Psoas muscle (tissue), 8 donors: ENCODE measurements at regions of chr10 and their contacts with region 1.

Region 1: GRCh38 chr10:45249978-45250693 is 65.3 kb downstream of the OR13A1 start:
- DNase-seq: no peak
- ATAC-seq: peak in 1 of 4 donors; percentile 51
- H3K4me3 ChIP-seq: peak overlapping the region; percentile 22
- H3K27ac ChIP-seq: no peak overlapping the region
- H3K4me1 ChIP-seq: no peaks in the 10 kb centered on the region
- H3K27me3 ChIP-seq: peaks cover 0 to 2% (median 0%) of the 10 kb centered on the region in 3 donors
- CTCF ChIP-seq: peak; percentile 56

Region 2: GRCh38 chr10:45058580-45058979 is 191.6 kb before region 1 on chr10:
- intact Hi-C with region 1: no loop called
- DNase-seq: no peak
- ATAC-seq: no peak
- H3K4me3 ChIP-seq: no peak overlapping the region
- H3K27ac ChIP-seq: no peak overlapping the region
- H3K4me1 ChIP-seq: no peaks in the 10 kb centered on the region
- H3K27me3 ChIP-seq: no peaks in the 10 kb centered on the region
- CTCF ChIP-seq: no peak

Region 3: GRCh38 chr10:45325116-45325515 is 75.0 kb after region 1 on chr10:
- intact Hi-C with region 1: no loop called
- DNase-seq: no peak
- ATAC-seq: no peak
- H3K4me3 ChIP-seq: no peak overlapping the region
- H3K27ac ChIP-seq: no peak overlapping the region
- H3K4me1 ChIP-seq: no peaks in the 10 kb centered on the region
- H3K27me3 ChIP-seq: no peaks in the 10 kb centered on the region
- CTCF ChIP-seq: no peak

Region 4: DNA sequence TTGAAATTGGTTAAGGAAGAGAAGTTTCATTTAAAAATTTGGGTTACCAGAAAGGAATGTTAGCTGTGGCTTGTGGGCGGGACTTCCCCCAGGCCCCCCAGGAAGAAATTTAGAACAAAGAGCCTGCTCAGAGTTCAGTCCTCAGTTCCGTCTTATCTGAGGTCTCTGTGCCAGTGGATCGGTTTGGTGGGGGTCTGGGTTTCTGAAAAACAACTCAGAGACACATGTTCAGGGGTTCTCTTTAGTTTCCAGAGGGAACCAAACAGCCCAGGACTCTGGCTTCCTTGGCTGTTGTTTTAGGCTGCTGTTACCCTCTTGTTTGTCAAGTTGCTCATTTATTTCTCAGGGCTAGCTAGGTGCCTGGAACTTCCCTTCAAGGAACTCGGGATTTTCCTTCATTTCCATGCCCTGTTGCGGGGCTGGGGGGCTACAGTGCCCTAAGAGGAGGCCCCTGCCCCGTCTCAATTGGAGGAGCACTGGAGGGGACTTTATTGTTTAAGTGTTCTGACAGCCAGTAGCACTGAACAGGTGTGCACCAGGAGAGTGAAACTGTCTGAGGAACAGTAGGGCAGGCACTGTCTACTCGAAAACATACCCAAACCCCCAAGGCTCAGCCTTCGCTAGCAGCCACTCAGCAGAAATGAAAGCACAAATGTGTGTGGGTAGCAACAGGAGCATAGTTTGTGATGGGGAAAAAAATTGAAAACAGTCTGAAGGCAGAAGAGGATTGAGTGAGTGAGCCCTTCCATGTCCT is 183.8 kb after region 1 on chr10:
- intact Hi-C with region 1: loop called in 1 of 2 experiments (anchors 10 kb)
- DNase-seq: no peak
- ATAC-seq: no peak
- H3K4me3 ChIP-seq: no peak overlapping the region
- H3K27ac ChIP-seq: no peak overlapping the region
- H3K4me1 ChIP-seq: no peaks in the 10 kb centered on the region
- H3K27me3 ChIP-seq: no peaks in the 10 kb centered on the region
- CTCF ChIP-seq: no peak

Region 5: DNA sequence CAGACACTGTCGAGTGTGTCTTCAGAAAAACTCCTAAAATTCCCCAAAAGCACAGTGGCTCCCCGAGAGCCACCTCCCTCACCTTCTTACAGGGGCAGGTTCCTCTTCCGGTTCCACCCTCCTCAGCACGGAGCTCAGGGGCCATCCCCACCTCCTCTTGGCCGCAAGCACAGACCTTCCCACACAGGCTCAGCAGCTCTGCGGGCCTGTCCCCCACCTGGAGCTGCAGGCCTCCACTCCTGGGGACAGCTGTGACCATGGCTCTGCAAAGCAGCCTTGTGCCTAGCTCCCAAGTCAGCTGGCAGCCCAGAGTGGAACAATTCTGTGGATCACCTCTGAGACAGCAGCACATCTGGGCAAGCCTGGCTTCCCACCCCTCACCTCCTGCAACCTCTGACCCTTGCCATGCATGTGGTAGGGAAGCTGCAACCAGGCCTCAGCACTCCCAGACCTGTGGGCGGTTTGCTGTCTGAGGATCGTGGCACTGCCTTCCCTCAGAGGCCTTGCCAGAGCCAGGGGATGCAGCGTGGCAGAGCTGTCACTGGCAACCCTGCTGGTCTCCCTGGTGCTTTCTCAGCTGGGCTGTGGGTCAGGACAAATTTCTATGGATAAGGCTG is 203.6 kb after region 1 on chr10:
- intact Hi-C with region 1: loop called in 1 of 2 experiments (anchors 10 kb)
- DNase-seq: no peak
- ATAC-seq: no peak
- H3K4me3 ChIP-seq: no peak overlapping the region
- H3K27ac ChIP-seq: no peak overlapping the region
- H3K4me1 ChIP-seq: peaks cover 13% of the 10 kb centered on the region
- H3K27me3 ChIP-seq: no peaks in the 10 kb centered on the region
- CTCF ChIP-seq: no peak

Region 6: DNA sequence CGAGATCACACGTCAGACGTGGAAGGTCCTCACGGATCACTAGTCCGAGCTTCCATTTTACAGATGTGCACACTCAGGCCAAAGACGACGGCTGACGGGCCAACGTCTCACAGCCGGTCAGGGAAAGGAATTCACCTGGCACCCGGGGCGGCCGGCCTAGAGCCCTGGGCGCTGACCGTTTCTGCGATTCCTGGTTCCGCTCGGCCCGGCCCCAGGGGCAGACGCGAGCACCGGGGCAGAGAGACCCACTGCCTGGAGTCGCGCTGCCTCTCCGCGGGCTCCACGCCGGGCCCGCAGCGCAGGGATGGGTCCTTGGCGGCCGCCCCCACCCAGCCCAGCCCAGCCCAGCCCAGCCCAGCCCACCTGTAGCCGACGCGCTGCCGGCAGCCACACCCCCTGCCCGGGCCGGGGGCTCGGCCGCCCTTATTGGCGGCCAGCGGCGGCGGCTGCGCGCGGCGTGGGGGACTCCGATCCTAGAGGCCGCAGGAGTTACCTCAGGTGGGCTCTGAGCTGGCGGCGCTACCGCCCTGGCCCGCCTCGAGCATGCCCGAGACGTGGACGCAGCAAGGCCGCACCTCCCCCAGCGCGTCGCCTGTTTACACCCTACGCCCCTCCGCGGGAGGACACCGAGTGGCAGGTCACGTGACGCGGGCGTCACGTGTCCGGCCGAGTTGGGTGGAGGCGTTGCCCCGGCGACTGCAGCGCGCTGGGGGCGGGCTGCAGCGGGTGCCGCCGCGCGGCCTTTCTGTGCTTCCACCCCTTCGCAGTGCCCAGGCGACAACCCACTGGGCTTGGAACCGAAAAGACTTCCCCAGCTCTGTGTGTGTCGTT is 344.4 kb after region 1 on chr10:
- intact Hi-C with region 1: loop called in 1 of 2 experiments (anchors 10 kb)
- DNase-seq: peak; percentile 94 to 97
- ATAC-seq: peak; percentile 98 to 100 (median 100)
- H3K4me3 ChIP-seq: peak overlapping the region; percentile 82
- H3K27ac ChIP-seq: peak overlapping the region; percentile 70
- H3K4me1 ChIP-seq: peaks cover 8% of the 10 kb centered on the region
- H3K27me3 ChIP-seq: no peaks in the 10 kb centered on the region
- CTCF ChIP-seq: no peak

Region 7: GRCh38 chr10:45672181-45673073 is 422.3 kb after region 1 on chr10 and contains the start of gene ZFAND4:
- intact Hi-C with region 1: loop called in 1 of 2 experiments (anchors 5 kb)
- DNase-seq: peak; percentile 99
- ATAC-seq: peak; percentile 98 to 99 (median 98)
- H3K4me3 ChIP-seq: peak within 1 kb of the TSS; percentile 94
- H3K27ac ChIP-seq: peak within 1 kb of the TSS; percentile 91
- H3K4me1 ChIP-seq: no peaks in the 10 kb centered on the region
- H3K27me3 ChIP-seq: no peaks in the 10 kb centered on the region
- CTCF ChIP-seq: peak; percentile 73
- total RNA-seq, gene ZFAND4: 4.2 to 7.2 (median 6.5) TPM